ENCODE measurements at regions of chr17 and their contacts with region 1.

Region 1: DNA sequence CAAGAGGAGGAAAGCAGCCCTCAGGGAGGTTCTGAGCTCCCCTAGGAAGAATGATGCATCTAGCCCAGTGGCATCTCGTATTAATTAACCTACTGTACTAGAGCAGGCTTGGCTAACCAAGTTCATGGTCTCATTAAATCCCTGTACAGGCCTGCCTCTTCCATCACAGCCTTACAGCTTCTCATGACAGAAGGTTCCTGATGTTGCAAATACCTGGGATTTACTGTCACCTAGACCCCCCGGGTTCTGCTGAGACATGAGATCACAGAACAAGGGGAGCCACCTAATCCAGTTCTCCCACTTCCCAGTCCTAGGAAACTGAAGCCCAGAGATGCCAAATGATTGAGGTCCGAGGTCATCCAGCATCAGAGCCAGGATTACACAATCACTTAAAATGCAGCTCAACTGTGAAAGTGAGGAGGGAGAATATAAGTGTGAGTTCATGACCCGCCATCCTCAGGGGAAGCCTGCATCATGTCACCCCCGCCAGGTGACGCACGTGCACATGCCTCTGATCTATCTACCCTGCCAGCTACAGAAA is 23.9 kb downstream of the ACLY start:
- DNase-seq: peak in 1 of 7 donors; percentile 24
- H3K4me3 ChIP-seq: no peak overlapping the region
- H3K27ac ChIP-seq: peak overlapping the region in 1 of 5 donors; percentile 53
- H3K4me1 ChIP-seq: peaks cover 0 to 4% of the 10 kb centered on the region in 2 donors
- H3K27me3 ChIP-seq: no peaks in the 10 kb centered on the region
- CTCF ChIP-seq: no peak
- POLR2A ChIP-seq: no peak

Region 2: GRCh38 chr17:41738077-41738735 is 156.7 kb before region 1 on chr17:
- intact Hi-C with region 1: no loop called
- DNase-seq: peak; percentile 71 to 90 (median 80)
- H3K4me3 ChIP-seq: no peak overlapping the region
- H3K27ac ChIP-seq: no peak overlapping the region
- H3K4me1 ChIP-seq: peaks cover 5 to 14% of the 10 kb centered on the region in 2 donors
- H3K27me3 ChIP-seq: peaks cover 31% of the 10 kb centered on the region
- CTCF ChIP-seq: peak; percentile 93 to 98 (median 98)
- POLR2A ChIP-seq: no peak

Region 3: GRCh38 chr17:41835800-41836549 is 58.9 kb before region 1 on chr17 and contains the start of gene NT5C3B:
- intact Hi-C with region 1: no loop called
- DNase-seq: peak in 6 of 7 donors; percentile 38 to 62 (median 56)
- H3K4me3 ChIP-seq: peak within 1 kb of the TSS; percentile 82 to 84 (median 82)
- H3K27ac ChIP-seq: peak within 1 kb of the TSS in 2 of 5 donors; percentile 65 to 75
- H3K4me1 ChIP-seq: peaks cover 0 to 15% of the 10 kb centered on the region in 2 donors
- H3K27me3 ChIP-seq: no peaks in the 10 kb centered on the region
- CTCF ChIP-seq: no peak
- POLR2A ChIP-seq: peak in 1 of 2 donors; percentile 25
- total RNA-seq, gene NT5C3B: 36.2 to 62.9 (median 49.4) TPM

Region 4: DNA sequence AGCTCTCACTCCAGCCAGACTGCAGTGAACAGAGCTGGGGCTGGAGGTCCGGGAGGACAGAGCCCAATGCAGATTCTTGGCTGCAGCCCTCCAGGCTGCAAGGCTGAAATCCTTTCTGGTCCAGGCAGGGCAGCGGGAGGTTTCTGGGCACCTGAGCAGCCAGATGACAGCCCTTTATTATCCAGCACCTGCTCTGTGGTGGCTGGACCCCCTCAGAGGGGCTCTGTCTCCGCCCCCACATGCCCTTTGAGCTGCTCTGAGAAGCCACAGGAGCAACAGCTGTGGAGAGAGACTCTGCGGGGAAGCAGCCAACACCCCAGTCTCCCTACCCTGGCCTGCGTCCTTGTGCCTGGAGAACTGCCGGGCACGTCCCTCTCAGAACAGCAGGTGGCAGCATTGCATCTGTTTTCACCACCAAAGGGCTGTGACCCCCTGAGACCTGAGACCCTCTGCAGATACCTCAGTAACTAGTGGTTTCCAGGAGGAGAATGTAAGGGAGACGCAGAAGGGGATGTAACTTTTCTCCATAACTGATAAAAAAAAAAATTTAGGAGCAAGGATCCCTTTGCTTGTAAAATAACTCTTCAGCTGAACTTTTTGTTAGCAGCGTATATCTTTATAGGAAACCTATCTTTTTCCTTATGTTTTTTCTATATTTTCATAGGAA is 68.0 kb after region 1 on chr17:
- intact Hi-C with region 1: no loop called
- DNase-seq: peak; percentile 63 to 89 (median 78)
- H3K4me3 ChIP-seq: no peak overlapping the region
- H3K27ac ChIP-seq: no peak overlapping the region
- H3K4me1 ChIP-seq: peaks cover 13 to 20% of the 10 kb centered on the region in 2 donors
- H3K27me3 ChIP-seq: no peaks in the 10 kb centered on the region
- CTCF ChIP-seq: peak; percentile 73 to 94 (median 87)
- POLR2A ChIP-seq: no peak

Region 5: GRCh38 chr17:42773290-42774035 is 878.6 kb after region 1 on chr17 and contains the start of gene VPS25:
- intact Hi-C with region 1: loop called in 1 of 2 experiments (anchors 10 kb)
- DNase-seq: peak; percentile 74 to 85 (median 79)
- H3K4me3 ChIP-seq: peak within 1 kb of the TSS; percentile 34 to 93 (median 68)
- H3K27ac ChIP-seq: peak within 1 kb of the TSS in 4 of 5 donors; percentile 60 to 89 (median 62)
- H3K4me1 ChIP-seq: peaks cover 9 to 16% of the 10 kb centered on the region in 2 donors
- H3K27me3 ChIP-seq: no peaks in the 10 kb centered on the region
- CTCF ChIP-seq: peak in 1 of 6 experiments; percentile 4
- POLR2A ChIP-seq: peak in 1 of 2 donors; percentile 38
- total RNA-seq, gene VPS25: 43.2 to 135 (median 52.6) TPM